CD4-positive, alpha-beta T cell (primary cell): ENCODE measurements at regions of chr4 and their contacts with region 1.

Region 1: GRCh38 chr4:73222466-73223257 is 35.9 kb downstream of the ANKRD17 start:
- DNase-seq: peak in 13 of 14 experiments; percentile 14 to 93 (median 41)
- ATAC-seq: peak; percentile 100
- H3K4me3 ChIP-seq: peak overlapping the region; percentile 65
- H3K4me3 Mint-ChIP-seq: no peak overlapping the region
- H3K27ac ChIP-seq: peak overlapping the region; percentile 80 to 90
- H3K27ac Mint-ChIP-seq: no peak overlapping the region
- H3K4me1 ChIP-seq: peaks cover 8% of the 10 kb centered on the region
- H3K4me1 Mint-ChIP-seq: peaks cover 52% of the 10 kb centered on the region
- H3K27me3 ChIP-seq: no peaks in the 10 kb centered on the region
- H3K27me3 Mint-ChIP-seq: no peaks in the 10 kb centered on the region
- CTCF ChIP-seq: no peak

Region 2: GRCh38 chr4:73069338-73070073 is 153.2 kb before region 1 on chr4 and contains the start of gene COX18:
- CTCF ChIA-PET with region 1: no interaction called
- POLR2A ChIA-PET with region 1: interaction called, 6 read pairs
- intact Hi-C with region 1: loop called in 1 of 2 experiments (anchors 10 kb)
- DNase-seq: peak; percentile 79 to 99 (median 90)
- ATAC-seq: peak; percentile 75
- H3K4me3 ChIP-seq: peak within 1 kb of the TSS; percentile 81
- H3K4me3 Mint-ChIP-seq: peak within 1 kb of the TSS; percentile 95
- H3K27ac ChIP-seq: peak within 1 kb of the TSS; percentile 96 to 99
- H3K27ac Mint-ChIP-seq: peak within 1 kb of the TSS; percentile 99
- H3K4me1 ChIP-seq: peaks cover 27% of the 10 kb centered on the region
- H3K4me1 Mint-ChIP-seq: peaks cover 46% of the 10 kb centered on the region
- H3K27me3 ChIP-seq: no peaks in the 10 kb centered on the region
- H3K27me3 Mint-ChIP-seq: no peaks in the 10 kb centered on the region
- CTCF ChIP-seq: no peak
- total RNA-seq, gene COX18: 5.2 to 6.3 TPM

Region 3: GRCh38 chr4:73178389-73178788 is 44.3 kb before region 1 on chr4:
- CTCF ChIA-PET with region 1: no interaction called
- POLR2A ChIA-PET with region 1: no interaction called
- intact Hi-C with region 1: loop called in 1 of 2 experiments (anchors 5 kb)
- DNase-seq: no peak
- ATAC-seq: no peak
- H3K4me3 ChIP-seq: no peak overlapping the region
- H3K4me3 Mint-ChIP-seq: no peak overlapping the region
- H3K27ac ChIP-seq: no peak overlapping the region
- H3K27ac Mint-ChIP-seq: no peak overlapping the region
- H3K4me1 ChIP-seq: no peaks in the 10 kb centered on the region
- H3K4me1 Mint-ChIP-seq: peaks cover 66% of the 10 kb centered on the region
- H3K27me3 ChIP-seq: no peaks in the 10 kb centered on the region
- H3K27me3 Mint-ChIP-seq: no peaks in the 10 kb centered on the region
- CTCF ChIP-seq: no peak